Ascending aorta (tissue), 2 donors: ENCODE measurements at regions of chr18 and their contacts with region 1.

Region 1: DNA sequence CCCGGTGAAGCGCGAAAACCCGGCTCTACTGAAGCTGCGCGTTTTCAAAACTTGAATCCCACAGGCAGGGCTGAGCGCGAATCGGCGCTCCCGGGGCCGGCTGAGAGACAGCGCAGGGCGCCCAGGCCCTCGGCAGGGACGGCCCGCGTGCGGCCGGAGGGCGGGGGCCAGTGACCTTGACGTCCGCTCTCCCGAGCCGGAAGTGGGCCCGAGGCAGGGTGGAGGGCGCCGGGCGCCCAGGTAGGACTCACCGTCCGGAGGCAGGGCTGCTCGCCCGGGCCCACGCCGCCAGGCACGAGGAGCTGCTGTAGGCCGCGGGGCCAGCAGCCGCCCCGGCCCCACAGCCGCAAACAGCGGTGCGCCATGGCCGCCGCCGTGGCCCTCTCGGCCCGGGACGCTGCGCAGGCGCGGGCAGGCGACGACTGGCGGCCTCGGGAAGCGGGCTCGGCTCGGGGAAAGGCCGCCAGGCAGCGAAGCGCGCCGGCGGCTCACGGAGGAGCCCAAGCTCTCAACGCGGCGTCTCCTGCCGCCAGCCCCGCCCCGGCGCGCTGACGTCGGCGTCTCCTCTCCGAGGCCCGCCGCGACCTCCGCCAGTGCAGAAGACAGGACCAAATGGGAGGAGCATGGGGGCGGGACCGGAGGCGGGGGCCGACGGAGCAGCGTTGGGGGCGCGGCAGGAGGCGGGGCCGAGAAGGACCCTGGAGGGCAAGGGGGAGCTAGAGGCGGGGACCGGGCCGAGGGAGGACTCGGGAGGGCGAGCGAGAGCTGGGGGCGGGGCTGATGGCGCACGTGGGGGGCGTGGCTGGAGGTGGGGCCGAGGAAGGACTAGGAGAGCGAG is at the start of gene AFG3L2:
- DNase-seq: peak; percentile 98 to 100
- H3K4me3 ChIP-seq: peak within 1 kb of the TSS; percentile 89 to 92
- H3K27ac ChIP-seq: peak within 1 kb of the TSS; percentile 99 to 100
- H3K4me1 ChIP-seq: peaks cover 6 to 16% of the 10 kb centered on the region in 2 donors
- H3K27me3 ChIP-seq: no peaks in the 10 kb centered on the region
- CTCF ChIP-seq: no peak
- total RNA-seq, gene AFG3L2: 31.5 TPM

Region 2: GRCh38 chr18:11908182-11909060 is 468.5 kb before region 1 on chr18 and contains the start of gene MPPE1:
- intact Hi-C with region 1: loop called (anchors 5 kb)
- DNase-seq: peak; percentile 49 to 95
- H3K4me3 ChIP-seq: peak within 1 kb of the TSS; percentile 77 to 94
- H3K27ac ChIP-seq: peak within 1 kb of the TSS; percentile 99 to 100
- H3K4me1 ChIP-seq: peaks cover 0 to 10% of the 10 kb centered on the region in 2 donors
- H3K27me3 ChIP-seq: no peaks in the 10 kb centered on the region
- CTCF ChIP-seq: no peak
- total RNA-seq, gene MPPE1: 18.9 TPM

Region 3: GRCh38 chr18:12278741-12279682 is 97.9 kb before region 1 on chr18:
- intact Hi-C with region 1: loop called (anchors 2 kb)
- DNase-seq: peak; percentile 73 to 97
- H3K4me3 ChIP-seq: peak overlapping the region; percentile 38 to 66
- H3K27ac ChIP-seq: peak overlapping the region; percentile 95 to 99
- H3K4me1 ChIP-seq: peaks cover 3 to 21% of the 10 kb centered on the region in 2 donors
- H3K27me3 ChIP-seq: no peaks in the 10 kb centered on the region
- CTCF ChIP-seq: peak in 2 of 3 experiments; percentile 12 to 31

Region 4: DNA sequence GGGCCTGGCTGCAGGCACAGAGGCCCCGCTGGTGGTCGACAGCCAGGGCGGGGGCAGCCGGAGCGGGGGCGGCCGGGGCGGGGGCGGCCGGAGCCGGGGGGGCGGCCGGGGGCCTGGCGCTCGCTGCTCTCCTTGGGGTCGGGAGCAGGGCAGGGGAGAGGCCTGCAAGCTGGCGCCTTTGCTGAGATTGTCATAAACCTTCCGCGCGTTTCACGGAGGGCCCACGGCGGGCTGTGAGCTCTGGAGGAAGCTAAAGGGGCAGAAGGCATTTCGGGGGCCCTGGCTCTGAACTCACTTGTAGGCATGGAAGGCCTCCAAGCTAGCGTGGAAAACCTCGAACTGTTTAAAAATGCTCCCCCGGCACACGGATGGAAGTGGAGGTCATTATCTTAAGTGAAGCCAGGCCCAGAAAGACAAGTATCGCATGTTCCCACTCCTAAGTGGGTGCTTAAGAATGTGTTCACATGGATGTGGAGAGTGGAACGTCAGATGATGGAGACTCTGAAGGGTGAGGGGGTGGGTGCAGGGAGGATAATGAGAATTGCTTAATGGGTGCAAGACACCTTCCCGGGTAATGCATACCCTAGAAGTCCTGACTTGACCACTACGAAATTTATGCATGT is 31.4 kb after region 1 on chr18:
- intact Hi-C with region 1: loop called (anchors 1 kb)
- DNase-seq: no peak
- H3K4me3 ChIP-seq: peak overlapping the region; percentile 80 to 93
- H3K27ac ChIP-seq: peak overlapping the region; percentile 84 to 87
- H3K4me1 ChIP-seq: peaks cover 0 to 12% of the 10 kb centered on the region in 2 donors
- H3K27me3 ChIP-seq: no peaks in the 10 kb centered on the region
- CTCF ChIP-seq: no peak

Region 5: GRCh38 chr18:12460874-12461273 is 83.9 kb after region 1 on chr18:
- intact Hi-C with region 1: no loop called
- DNase-seq: no peak
- H3K4me3 ChIP-seq: no peak overlapping the region
- H3K27ac ChIP-seq: no peak overlapping the region
- H3K4me1 ChIP-seq: no peaks in the 10 kb centered on the region
- H3K27me3 ChIP-seq: no peaks in the 10 kb centered on the region
- CTCF ChIP-seq: no peak

Region 6: GRCh38 chr18:12702221-12703095 is 325.5 kb after region 1 on chr18 and contains the starts of genes CEP76 and PSMG2:
- intact Hi-C with region 1: loop called (anchors 2 kb)
- DNase-seq: peak; percentile 55 to 93
- H3K4me3 ChIP-seq: peak within 1 kb of the TSS; percentile 77 to 83
- H3K27ac ChIP-seq: peak within 1 kb of the TSS; percentile 97 to 98
- H3K4me1 ChIP-seq: peaks cover 3 to 17% of the 10 kb centered on the region in 2 donors
- H3K27me3 ChIP-seq: no peaks in the 10 kb centered on the region
- CTCF ChIP-seq: peak in 1 of 3 experiments; percentile 6
- total RNA-seq, gene CEP76: 10.3 TPM
- total RNA-seq, gene PSMG2: 52.2 TPM

Region 7: DNA sequence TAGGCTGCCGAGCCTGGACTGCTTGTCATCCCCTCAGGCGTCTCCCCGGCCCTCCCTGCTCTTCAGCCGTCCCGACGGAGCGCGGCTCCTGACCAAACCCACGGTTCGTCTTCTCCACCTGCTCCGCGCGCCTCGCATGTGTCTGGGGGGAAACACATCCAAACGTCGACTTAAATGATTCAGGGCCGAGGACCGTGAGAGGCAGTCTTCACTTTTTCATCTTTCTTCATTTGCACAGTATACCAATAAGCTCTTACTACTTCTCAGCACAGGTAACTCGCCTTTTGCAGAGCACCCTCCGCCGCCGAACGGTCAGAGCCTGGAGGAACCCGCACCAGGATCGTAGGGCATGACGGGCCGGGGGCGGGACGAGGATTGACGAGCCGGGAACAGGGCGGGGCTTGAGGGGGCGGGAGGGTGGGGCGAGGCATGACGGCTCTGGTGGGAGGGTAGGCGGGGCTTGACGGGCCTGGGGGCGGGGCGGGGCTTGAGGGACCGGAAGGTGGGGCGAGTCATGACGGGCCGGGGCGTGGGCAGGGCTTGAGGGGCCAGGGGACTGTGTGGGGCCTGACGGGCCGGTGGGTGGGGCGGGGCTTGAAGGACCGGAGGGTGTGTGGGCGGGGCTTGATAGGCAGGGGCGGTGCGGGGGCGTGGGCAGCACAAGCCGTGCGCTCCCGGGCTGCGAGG is 570.6 kb after region 1 on chr18 and contains the start of gene SEH1L:
- intact Hi-C with region 1: loop called (anchors 1 kb)
- DNase-seq: peak; percentile 93 to 99
- H3K4me3 ChIP-seq: peak within 1 kb of the TSS; percentile 78 to 87
- H3K27ac ChIP-seq: peak within 1 kb of the TSS; percentile 98
- H3K4me1 ChIP-seq: peaks cover 5 to 26% of the 10 kb centered on the region in 2 donors
- H3K27me3 ChIP-seq: no peaks in the 10 kb centered on the region
- CTCF ChIP-seq: no peak
- total RNA-seq, gene SEH1L: 16.3 TPM